Thyroid gland (tissue), 4 donors: ENCODE measurements at regions of chr17 and their contacts with region 1.

Region 1: DNA sequence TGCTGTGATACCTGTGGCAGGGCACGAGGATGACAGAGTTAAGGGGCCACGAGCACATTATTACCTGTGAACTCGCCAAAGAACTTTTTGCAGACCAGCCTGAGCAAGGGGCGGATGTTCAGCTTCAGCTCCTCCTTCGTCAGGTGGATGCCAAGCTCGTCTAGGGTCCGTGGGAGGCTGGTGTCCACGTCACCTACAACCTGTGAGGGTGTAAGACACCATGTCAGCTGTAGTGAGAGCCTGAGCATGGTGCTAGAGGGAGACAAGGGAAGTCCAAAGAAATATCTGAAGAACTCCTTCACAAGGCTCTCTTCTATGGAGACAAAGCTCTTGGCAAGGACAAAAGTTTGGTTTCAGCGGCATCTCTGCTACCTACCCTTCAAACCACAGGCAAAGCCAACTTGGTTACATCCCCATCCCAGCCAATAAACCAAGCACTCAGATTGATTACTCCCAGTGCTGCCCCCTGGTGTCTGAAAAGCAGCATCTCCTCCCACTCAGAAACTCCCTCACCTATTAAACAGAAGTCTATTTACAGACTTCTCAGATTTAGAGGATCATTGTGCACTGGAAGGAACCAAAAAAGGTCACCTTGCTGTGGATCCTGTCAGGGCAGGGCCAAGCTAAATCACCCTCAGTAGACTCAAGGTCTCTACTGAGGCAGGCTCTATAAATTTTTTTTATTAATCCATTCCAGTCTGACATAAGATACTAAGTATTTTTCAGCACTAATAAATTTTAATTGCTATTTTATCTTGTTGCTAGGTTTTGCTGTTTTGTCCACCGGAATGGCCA is 17.4 kb downstream of the HIGD1B start:
- DNase-seq: peak; percentile 57 to 68
- H3K4me3 ChIP-seq: no peak overlapping the region
- H3K27ac ChIP-seq: no peak overlapping the region
- H3K4me1 ChIP-seq: no peaks in the 10 kb centered on the region
- H3K27me3 ChIP-seq: no peaks in the 10 kb centered on the region
- CTCF ChIP-seq: peak; percentile 52 to 83 (median 77)
- POLR2A ChIP-seq: no peak

Region 2: DNA sequence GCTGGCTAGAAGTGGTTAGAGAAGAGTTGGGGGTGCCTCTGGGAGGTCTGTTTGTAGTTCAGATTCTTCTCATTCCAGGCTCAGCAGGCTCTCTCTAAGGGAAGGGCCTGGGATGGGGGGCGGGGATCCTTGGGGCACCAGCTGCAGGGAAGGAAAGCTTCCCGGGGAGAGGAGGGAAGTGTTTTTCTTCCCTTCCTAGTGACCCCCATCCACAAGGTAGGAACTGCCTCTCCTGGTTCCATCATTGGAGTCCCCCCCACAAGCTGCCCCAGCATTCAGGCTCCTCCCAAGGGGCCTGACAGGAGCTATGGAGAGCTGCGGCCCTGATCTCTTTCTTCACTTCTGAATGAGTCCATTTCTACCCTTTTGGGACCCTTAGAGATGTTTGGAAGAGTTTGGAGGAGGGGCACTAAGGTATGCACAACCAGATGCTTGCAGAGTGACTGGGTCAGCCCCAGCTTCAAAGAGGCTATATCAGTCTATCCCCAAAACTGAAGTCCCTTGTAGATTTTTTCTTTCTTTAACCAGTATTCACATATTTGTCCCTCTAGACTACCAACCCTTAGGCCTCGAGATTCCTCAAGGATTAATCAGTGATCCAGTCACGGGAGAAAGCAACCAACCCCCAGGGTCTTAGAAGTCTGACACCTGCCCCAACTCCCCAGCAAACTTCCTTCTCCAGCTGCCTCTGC is 321.7 kb before region 1 on chr17:
- intact Hi-C with region 1: no loop called
- DNase-seq: peak; percentile 32 to 54
- H3K4me3 ChIP-seq: no peak overlapping the region
- H3K27ac ChIP-seq: peak overlapping the region in 2 of 3 donors; percentile 23 to 30
- H3K4me1 ChIP-seq: peaks cover 8 to 17% of the 10 kb centered on the region in 2 donors
- H3K27me3 ChIP-seq: no peaks in the 10 kb centered on the region
- CTCF ChIP-seq: no peak
- POLR2A ChIP-seq: no peak

Region 3: DNA sequence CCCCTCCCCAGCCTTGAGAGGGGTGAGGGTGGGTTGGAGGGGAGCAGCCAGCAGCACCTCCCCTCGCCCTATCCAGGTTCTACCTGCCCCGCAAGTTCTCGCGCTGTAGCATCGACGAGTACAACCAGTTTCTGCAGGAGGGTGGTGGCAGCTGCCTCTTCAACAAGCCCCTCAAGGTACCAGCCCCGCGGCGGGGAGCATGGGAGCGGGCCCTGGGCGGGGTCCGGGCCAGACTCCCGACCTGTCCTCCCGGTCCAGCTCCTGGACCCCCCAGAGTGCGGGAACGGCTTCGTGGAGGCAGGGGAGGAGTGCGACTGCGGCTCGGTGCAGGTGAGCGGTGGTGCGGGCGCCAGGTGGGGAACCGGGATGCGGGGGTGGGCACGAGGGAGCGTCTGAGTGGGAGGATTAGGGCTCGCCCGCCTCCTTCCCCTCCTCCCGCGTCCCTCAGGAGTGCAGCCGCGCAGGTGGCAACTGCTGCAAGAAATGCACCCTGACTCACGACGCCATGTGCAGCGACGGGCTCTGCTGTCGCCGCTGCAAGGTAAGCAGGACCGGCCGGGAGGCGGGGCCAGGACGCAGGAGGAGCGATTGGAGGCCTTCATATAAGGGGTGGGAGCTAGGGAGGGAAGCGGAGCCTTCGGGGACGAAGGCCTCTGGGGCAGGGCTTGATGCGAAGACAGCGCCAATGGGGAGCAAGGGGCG is 89.8 kb before region 1 on chr17:
- intact Hi-C with region 1: loop called (anchors 2 kb)
- DNase-seq: peak; percentile 97 to 98
- H3K4me3 ChIP-seq: peak overlapping the region in 2 of 3 donors; percentile 19 to 42
- H3K27ac ChIP-seq: no peak overlapping the region
- H3K4me1 ChIP-seq: peaks cover 13 to 22% of the 10 kb centered on the region in 2 donors
- H3K27me3 ChIP-seq: no peaks in the 10 kb centered on the region
- CTCF ChIP-seq: peak in 1 of 6 experiments; percentile 11
- POLR2A ChIP-seq: peak in 1 of 2 donors; percentile 25

Region 4: GRCh38 chr17:44804302-44805089 is 60.6 kb before region 1 on chr17:
- intact Hi-C with region 1: no loop called
- DNase-seq: no peak
- H3K4me3 ChIP-seq: no peak overlapping the region
- H3K27ac ChIP-seq: no peak overlapping the region
- H3K4me1 ChIP-seq: no peaks in the 10 kb centered on the region
- H3K27me3 ChIP-seq: no peaks in the 10 kb centered on the region
- CTCF ChIP-seq: no peak
- POLR2A ChIP-seq: no peak